Mammary epithelial cell (primary cell): ENCODE measurements at regions of chr18 and their contacts with region 1.

Region 1: GRCh38 chr18:2571200-2572143 is at the starts of genes METTL4 and NDC80:
- DNase-seq: peak; percentile 88
- H3K4me3 ChIP-seq: peak within 1 kb of the TSS; percentile 81 to 97 (median 87)
- H3K27ac ChIP-seq: peak within 1 kb of the TSS; percentile 98
- H3K4me1 ChIP-seq: peaks cover 10% of the 10 kb centered on the region
- H3K27me3 ChIP-seq: no peaks in the 10 kb centered on the region
- CTCF ChIP-seq: no peak
- total RNA-seq, gene METTL4: 8.2 to 14.5 TPM
- total RNA-seq, gene NDC80: 1.7 to 29.8 TPM

Region 2: GRCh38 chr18:2655178-2655953 is 83.9 kb after region 1 on chr18 and contains the start of gene SMCHD1:
- CTCF ChIA-PET with region 1: no interaction called
- dilution Hi-C with region 1: loop called (anchors 5 kb)
- in situ Hi-C with region 1: no loop called
- intact Hi-C with region 1: loop called (anchors 1 kb)
- DNase-seq: peak; percentile 83
- H3K4me3 ChIP-seq: peak within 1 kb of the TSS; percentile 70 to 88 (median 81)
- H3K27ac ChIP-seq: peak within 1 kb of the TSS; percentile 83
- H3K4me1 ChIP-seq: peaks cover 12% of the 10 kb centered on the region
- H3K27me3 ChIP-seq: no peaks in the 10 kb centered on the region
- CTCF ChIP-seq: no peak
- total RNA-seq, gene SMCHD1: 44.4 to 56.8 TPM

Region 3: GRCh38 chr18:2716394-2717326 is 145.2 kb after region 1 on chr18:
- CTCF ChIA-PET with region 1: no interaction called
- dilution Hi-C with region 1: no loop called
- in situ Hi-C with region 1: no loop called
- intact Hi-C with region 1: loop called (anchors 10 kb)
- DNase-seq: no peak
- H3K4me3 ChIP-seq: no peak overlapping the region
- H3K27ac ChIP-seq: no peak overlapping the region
- H3K4me1 ChIP-seq: no peaks in the 10 kb centered on the region
- H3K27me3 ChIP-seq: no peaks in the 10 kb centered on the region
- CTCF ChIP-seq: no peak

Region 4: GRCh38 chr18:3923750-3924149 is 1352.3 kb after region 1 on chr18:
- CTCF ChIA-PET with region 1: no interaction called
- dilution Hi-C with region 1: no loop called
- in situ Hi-C with region 1: no loop called
- intact Hi-C with region 1: no loop called
- DNase-seq: peak; percentile 83
- H3K4me3 ChIP-seq: no peak overlapping the region
- H3K27ac ChIP-seq: no peak overlapping the region
- H3K4me1 ChIP-seq: peaks cover 16% of the 10 kb centered on the region
- H3K27me3 ChIP-seq: no peaks in the 10 kb centered on the region
- CTCF ChIP-seq: no peak